ENCODE measurements at regions of chr1 and their contacts with region 1.

Region 1: GRCh38 chr1:17011439-17012307 is at the start of gene ATP13A2:
- DNase-seq: peak; percentile 76 to 87 (median 82)
- ATAC-seq: peak; percentile 99
- H3K4me3 ChIP-seq: peak within 1 kb of the TSS; percentile 72
- H3K4me3 Mint-ChIP-seq: peak within 1 kb of the TSS; percentile 81 to 91 (median 86)
- H3K27ac ChIP-seq: peak within 1 kb of the TSS; percentile 72
- H3K27ac Mint-ChIP-seq: peak within 1 kb of the TSS; percentile 23 to 83 (median 75)
- H3K4me1 ChIP-seq: peaks cover 15 to 16% of the 10 kb centered on the region in 2 donors
- H3K4me1 Mint-ChIP-seq: peaks cover 9 to 27% (median 17%) of the 10 kb centered on the region in 7 donors
- H3K27me3 ChIP-seq: no peaks in the 10 kb centered on the region
- H3K27me3 Mint-ChIP-seq: peaks cover 0 to 2% (median 0%) of the 10 kb centered on the region in 5 donors
- total RNA-seq, gene ATP13A2: 32.9 to 57.4 (median 42.1) TPM

Region 2: DNA sequence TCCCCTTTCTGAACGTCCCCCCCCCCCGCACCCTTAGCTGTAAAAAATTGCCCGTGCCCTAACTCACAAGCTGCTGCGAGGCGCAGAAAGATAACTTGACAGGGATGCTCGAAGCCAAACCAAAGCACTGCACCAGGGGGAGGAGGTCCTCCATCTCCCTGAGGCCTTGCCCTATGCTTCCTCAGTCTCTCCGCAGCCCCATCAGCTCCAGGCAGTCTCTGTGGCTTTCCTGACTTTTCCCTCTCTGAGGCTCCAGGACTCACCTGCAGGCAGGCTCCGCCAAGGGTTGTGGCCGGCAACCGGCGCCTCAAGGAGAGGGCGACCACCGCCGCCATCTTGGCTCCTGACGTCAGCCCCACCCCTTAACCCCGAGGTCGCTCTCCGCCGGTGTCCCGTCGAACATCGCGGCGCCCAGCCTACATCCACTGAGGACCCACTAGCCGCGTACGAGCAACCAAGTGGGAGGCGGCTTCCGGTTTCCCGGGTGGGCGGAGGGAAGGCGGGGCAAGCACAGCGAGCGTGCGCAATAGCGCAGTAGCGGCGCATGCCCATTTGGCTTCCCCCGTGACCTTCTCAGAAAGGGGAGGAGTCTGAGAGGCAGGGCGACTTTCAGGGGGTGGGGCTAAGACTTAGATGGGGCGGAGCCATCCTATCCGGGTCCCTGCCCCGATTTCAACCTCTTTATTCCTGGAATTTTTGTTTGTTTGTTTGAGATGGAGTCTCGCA is 42.2 kb after region 1 on chr1 and contains the start of gene SDHB:
- CTCF ChIA-PET with region 1: interaction called, 4 read pairs
- POLR2A ChIA-PET with region 1: interaction called, 3 read pairs
- intact Hi-C with region 1: loop called (anchors 1 kb)
- DNase-seq: peak; percentile 97 to 100 (median 100)
- ATAC-seq: peak; percentile 99
- H3K4me3 ChIP-seq: peak within 1 kb of the TSS; percentile 77
- H3K4me3 Mint-ChIP-seq: peak within 1 kb of the TSS; percentile 87 to 99 (median 98)
- H3K27ac ChIP-seq: peak within 1 kb of the TSS; percentile 81
- H3K27ac Mint-ChIP-seq: peak within 1 kb of the TSS; percentile 94 to 99 (median 97)
- H3K4me1 ChIP-seq: peaks cover 13 to 14% of the 10 kb centered on the region in 2 donors
- H3K4me1 Mint-ChIP-seq: peaks cover 8 to 39% (median 33%) of the 10 kb centered on the region in 7 donors
- H3K27me3 ChIP-seq: no peaks in the 10 kb centered on the region
- H3K27me3 Mint-ChIP-seq: peaks cover 0 to 7% (median 6%) of the 10 kb centered on the region in 5 donors
- total RNA-seq, gene SDHB: 53.3 to 81.3 (median 61.1) TPM

Region 3: GRCh38 chr1:17098446-17099251 is 87.0 kb after region 1 on chr1:
- CTCF ChIA-PET with region 1: no interaction called
- POLR2A ChIA-PET with region 1: no interaction called
- intact Hi-C with region 1: no loop called
- DNase-seq: no peak
- ATAC-seq: peak; percentile 64
- H3K4me3 ChIP-seq: no peak overlapping the region
- H3K4me3 Mint-ChIP-seq: no peak overlapping the region
- H3K27ac ChIP-seq: no peak overlapping the region
- H3K27ac Mint-ChIP-seq: no peak overlapping the region
- H3K4me1 ChIP-seq: no peaks in the 10 kb centered on the region
- H3K4me1 Mint-ChIP-seq: peaks cover 0 to 3% (median 0%) of the 10 kb centered on the region in 7 donors
- H3K27me3 ChIP-seq: no peaks in the 10 kb centered on the region
- H3K27me3 Mint-ChIP-seq: peaks cover 0 to 3% (median 0%) of the 10 kb centered on the region in 5 donors